ENCODE measurements at regions of chr6 and their contacts with region 1.

Region 1: DNA sequence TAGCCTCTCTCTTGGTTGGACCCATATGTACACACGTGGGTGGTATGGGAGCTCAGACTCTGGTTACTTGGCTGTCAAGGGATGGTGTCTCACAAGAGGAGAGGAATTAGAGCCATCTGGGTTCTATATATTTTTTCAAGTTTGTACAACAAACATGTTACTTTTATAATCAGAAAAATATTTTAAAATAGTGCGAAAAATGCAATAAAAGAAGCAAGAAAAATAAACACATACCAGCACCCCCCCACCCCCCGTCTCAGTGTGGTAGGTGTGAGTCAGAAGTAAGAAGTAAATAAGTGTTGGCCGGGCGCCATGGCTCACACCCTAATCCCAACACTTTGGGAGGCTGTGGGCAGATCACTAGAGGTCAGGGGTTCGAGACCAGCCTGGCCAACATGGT is 2.1 kb upstream of the TIAM2 start:
- DNase-seq: no peak
- H3K4me3 ChIP-seq: no peak overlapping the region
- H3K27ac ChIP-seq: no peak overlapping the region
- H3K4me1 ChIP-seq: no peaks in the 10 kb centered on the region
- H3K27me3 ChIP-seq: peaks cover 0 to 4% of the 10 kb centered on the region in 2 donors
- CTCF ChIP-seq: no peak
- POLR2A ChIP-seq: no peak

Region 2: DNA sequence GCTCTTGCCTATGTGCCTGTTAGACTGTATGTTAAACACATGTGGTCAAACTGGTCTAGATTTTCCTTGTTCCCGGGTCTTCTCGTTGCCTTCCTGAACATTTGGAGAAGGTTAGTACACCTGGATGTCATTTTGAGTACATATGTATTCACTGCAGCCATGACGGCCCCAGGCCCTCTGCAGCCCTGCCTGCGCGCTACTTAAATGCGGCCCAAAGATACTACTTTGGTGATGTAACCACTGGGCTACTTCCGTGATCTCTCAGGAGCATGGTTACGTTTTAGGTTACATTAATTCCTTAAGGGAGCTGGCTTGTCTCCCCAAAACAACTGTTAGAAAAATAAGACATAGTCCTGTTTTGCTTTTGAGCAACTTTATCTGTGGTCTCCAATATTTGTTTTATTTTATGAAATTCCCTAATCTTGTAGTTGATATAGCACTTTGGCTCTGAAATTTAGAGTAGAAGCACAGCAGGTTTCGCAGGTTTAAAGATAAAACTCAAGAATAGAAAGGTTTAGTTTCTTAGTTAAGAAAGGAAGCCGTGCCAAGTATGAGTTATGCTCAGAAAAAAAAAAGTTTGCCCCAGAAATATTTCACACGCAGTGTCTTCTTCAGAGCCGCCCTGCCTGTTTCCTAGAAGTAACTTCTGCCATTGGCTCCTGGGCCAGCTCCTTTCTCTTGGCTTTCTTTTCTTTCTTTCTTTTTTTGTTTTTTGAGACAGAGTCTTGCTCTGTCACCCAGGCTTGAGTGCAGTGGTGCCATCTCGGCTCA is 40.2 kb after region 1 on chr6:
- intact Hi-C with region 1: loop called (anchors 2 kb)
- DNase-seq: no peak
- H3K4me3 ChIP-seq: no peak overlapping the region
- H3K27ac ChIP-seq: peak overlapping the region in 1 of 2 donors; percentile 66
- H3K4me1 ChIP-seq: no peaks in the 10 kb centered on the region
- H3K27me3 ChIP-seq: no peaks in the 10 kb centered on the region
- CTCF ChIP-seq: no peak
- POLR2A ChIP-seq: no peak

Measured in breast epithelium (tissue), 4 donors.